Sigmoid colon (tissue), 7 donors: ENCODE measurements at regions of chr3 and their contacts with region 1.

Region 1: DNA sequence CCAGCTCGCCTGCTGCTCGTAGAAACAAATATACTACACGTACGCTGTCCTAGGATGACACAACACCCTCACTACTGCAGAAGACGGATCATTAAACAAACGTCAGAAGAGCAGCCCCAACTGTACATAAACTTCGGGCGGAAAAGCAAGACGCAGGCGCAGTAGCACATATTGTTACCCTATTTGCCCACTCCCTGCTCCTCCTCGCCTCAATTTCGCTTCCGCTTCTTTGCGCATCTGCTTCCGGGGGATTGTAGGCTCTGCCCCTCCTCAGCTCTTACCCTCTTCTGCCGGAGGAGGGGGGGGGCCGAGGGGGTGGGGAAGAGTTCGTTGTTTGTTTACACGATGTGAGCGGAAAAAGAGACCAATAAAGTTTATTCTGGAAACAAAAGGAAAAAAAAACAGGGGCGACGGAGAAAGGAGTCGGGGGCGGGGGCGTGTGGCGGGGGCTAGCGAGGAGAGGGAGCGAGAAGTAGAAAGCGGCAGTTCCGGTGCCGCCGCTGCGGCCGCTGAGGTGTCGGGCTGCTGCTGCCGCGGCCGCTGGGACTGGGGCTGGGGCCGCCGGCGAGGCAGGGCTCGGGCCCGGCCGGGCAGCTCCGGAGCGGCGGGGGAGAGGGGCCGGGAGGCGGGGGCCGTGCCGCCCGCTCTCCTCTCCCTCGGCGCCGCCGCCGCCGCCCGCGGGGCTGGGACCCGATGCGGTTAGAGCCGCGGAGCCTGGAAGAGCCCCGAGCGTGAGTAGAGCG is at the start of gene PIK3CA:
- DNase-seq: peak; percentile 99
- H3K4me3 ChIP-seq: peak within 1 kb of the TSS; percentile 58 to 94 (median 80)
- H3K27ac ChIP-seq: peak within 1 kb of the TSS; percentile 95 to 99 (median 98)
- H3K4me1 ChIP-seq: peaks cover 0 to 27% (median 18%) of the 10 kb centered on the region in 4 donors
- H3K27me3 ChIP-seq: no peaks in the 10 kb centered on the region
- CTCF ChIP-seq: no peak
- EP300 ChIP-seq: no peak
- POLR2A ChIP-seq: peak; percentile 43 to 62
- total RNA-seq, gene PIK3CA: 21.6 to 44.6 (median 25.4) TPM

Region 2: GRCh38 chr3:178875836-178876235 is 272.2 kb before region 1 on chr3:
- intact Hi-C with region 1: no loop called
- DNase-seq: no peak
- H3K4me3 ChIP-seq: no peak overlapping the region
- H3K27ac ChIP-seq: no peak overlapping the region
- H3K4me1 ChIP-seq: peaks cover 0 to 3% (median 0%) of the 10 kb centered on the region in 4 donors
- H3K27me3 ChIP-seq: no peaks in the 10 kb centered on the region
- CTCF ChIP-seq: no peak
- EP300 ChIP-seq: no peak
- POLR2A ChIP-seq: no peak

Region 3: DNA sequence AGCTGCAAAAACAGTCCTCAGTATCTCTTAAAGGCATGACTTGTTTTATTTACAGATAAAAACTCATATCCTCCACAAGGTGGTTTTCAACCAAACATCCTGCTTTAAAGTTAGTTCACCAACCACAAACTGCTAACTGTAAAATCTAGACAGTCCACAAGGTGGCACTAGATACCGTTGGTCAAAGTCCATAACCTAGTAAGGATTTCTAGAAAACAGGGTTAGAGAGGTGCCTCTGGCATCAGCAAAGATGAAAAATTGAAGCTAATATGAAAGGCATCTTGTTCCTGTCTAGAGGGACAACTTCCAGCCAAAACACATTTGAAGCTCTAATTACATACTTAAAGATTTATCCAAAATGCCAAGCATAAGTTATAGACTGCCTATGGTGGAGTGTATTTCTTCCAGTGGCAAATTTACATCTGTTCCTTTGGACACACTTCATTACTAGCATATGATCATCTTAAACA is 132.5 kb before region 1 on chr3:
- intact Hi-C with region 1: loop called (anchors 5 kb)
- DNase-seq: no peak
- H3K4me3 ChIP-seq: no peak overlapping the region
- H3K27ac ChIP-seq: no peak overlapping the region
- H3K4me1 ChIP-seq: peaks cover 0 to 11% (median 10%) of the 10 kb centered on the region in 4 donors
- H3K27me3 ChIP-seq: no peaks in the 10 kb centered on the region
- CTCF ChIP-seq: peak; percentile 62 to 92 (median 85)
- EP300 ChIP-seq: no peak
- POLR2A ChIP-seq: no peak

Region 4: GRCh38 chr3:179071550-179072397 is 76.3 kb before region 1 on chr3 and contains the start of gene ZMAT3:
- intact Hi-C with region 1: loop called (anchors 5 kb)
- DNase-seq: peak; percentile 92
- H3K4me3 ChIP-seq: peak within 1 kb of the TSS; percentile 60 to 92 (median 75)
- H3K27ac ChIP-seq: peak within 1 kb of the TSS; percentile 87 to 96 (median 92)
- H3K4me1 ChIP-seq: peaks cover 0 to 29% (median 22%) of the 10 kb centered on the region in 4 donors
- H3K27me3 ChIP-seq: no peaks in the 10 kb centered on the region
- CTCF ChIP-seq: no peak
- EP300 ChIP-seq: no peak
- POLR2A ChIP-seq: no peak
- total RNA-seq, gene ZMAT3: 12.4 to 16.9 (median 14.7) TPM

Region 5: GRCh38 chr3:179098388-179099077 is 49.5 kb before region 1 on chr3:
- intact Hi-C with region 1: loop called (anchors 5 kb)
- DNase-seq: no peak
- H3K4me3 ChIP-seq: peak overlapping the region; percentile 4 to 41 (median 33)
- H3K27ac ChIP-seq: peak overlapping the region in 2 of 4 donors; percentile 59 to 63
- H3K4me1 ChIP-seq: peaks cover 0 to 6% (median 0%) of the 10 kb centered on the region in 4 donors
- H3K27me3 ChIP-seq: no peaks in the 10 kb centered on the region
- CTCF ChIP-seq: peak in 3 of 4 experiments; percentile 18 to 32 (median 32)
- EP300 ChIP-seq: no peak
- POLR2A ChIP-seq: no peak

Region 6: DNA sequence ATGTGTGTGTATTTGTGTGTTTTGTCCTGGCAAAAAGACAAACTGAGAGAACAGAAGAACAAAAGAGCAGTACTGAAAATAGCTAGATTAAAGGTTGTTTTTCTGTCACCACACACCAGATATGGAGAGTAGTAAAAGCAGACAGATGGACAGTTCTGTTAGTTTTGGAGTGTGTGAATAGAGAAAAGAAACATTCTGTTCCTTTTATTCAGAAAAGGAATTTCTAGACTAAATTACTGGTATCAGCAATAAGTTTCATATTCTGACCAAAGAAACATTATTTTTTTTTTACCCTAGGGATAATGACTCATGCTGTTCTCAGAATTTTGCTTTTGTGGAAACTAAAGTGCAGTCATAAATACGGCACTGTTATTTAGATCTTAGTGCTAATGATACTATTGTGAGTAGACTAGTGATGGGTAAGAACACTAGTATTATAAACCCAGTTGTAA is 33.0 kb after region 1 on chr3:
- intact Hi-C with region 1: loop called (anchors 5 kb)
- DNase-seq: no peak
- H3K4me3 ChIP-seq: no peak overlapping the region
- H3K27ac ChIP-seq: peak overlapping the region; percentile 52 to 67 (median 64)
- H3K4me1 ChIP-seq: peaks cover 0 to 77% (median 56%) of the 10 kb centered on the region in 4 donors
- H3K27me3 ChIP-seq: no peaks in the 10 kb centered on the region
- CTCF ChIP-seq: no peak
- EP300 ChIP-seq: peak in 2 of 4 donors; percentile 24 to 34
- POLR2A ChIP-seq: no peak

Region 7: GRCh38 chr3:179260949-179261765 is 113.1 kb after region 1 on chr3:
- intact Hi-C with region 1: loop called (anchors 2 kb)
- DNase-seq: peak; percentile 82
- H3K4me3 ChIP-seq: peak overlapping the region; percentile 53 to 71 (median 60)
- H3K27ac ChIP-seq: peak overlapping the region; percentile 58 to 75 (median 68)
- H3K4me1 ChIP-seq: peaks cover 0 to 4% (median 2%) of the 10 kb centered on the region in 4 donors
- H3K27me3 ChIP-seq: no peaks in the 10 kb centered on the region
- CTCF ChIP-seq: no peak
- EP300 ChIP-seq: no peak
- POLR2A ChIP-seq: no peak

Region 8: GRCh38 chr3:179562591-179563270 is 414.7 kb after region 1 on chr3 and contains the start of gene ACTL6A:
- intact Hi-C with region 1: loop called (anchors 2 kb)
- DNase-seq: peak; percentile 100
- H3K4me3 ChIP-seq: peak within 1 kb of the TSS; percentile 75 to 90 (median 79)
- H3K27ac ChIP-seq: peak within 1 kb of the TSS; percentile 83 to 92 (median 88)
- H3K4me1 ChIP-seq: peaks cover 0 to 17% (median 12%) of the 10 kb centered on the region in 4 donors
- H3K27me3 ChIP-seq: no peaks in the 10 kb centered on the region
- CTCF ChIP-seq: no peak
- EP300 ChIP-seq: no peak
- POLR2A ChIP-seq: peak; percentile 57 to 64
- total RNA-seq, gene ACTL6A: 28.8 to 65.7 (median 50.3) TPM

Region 9: GRCh38 chr3:180329187-180329586 is 1181.1 kb after region 1 on chr3:
- intact Hi-C with region 1: no loop called
- DNase-seq: no peak
- H3K4me3 ChIP-seq: no peak overlapping the region
- H3K27ac ChIP-seq: no peak overlapping the region
- H3K4me1 ChIP-seq: no peaks in the 10 kb centered on the region
- H3K27me3 ChIP-seq: no peaks in the 10 kb centered on the region
- CTCF ChIP-seq: no peak
- EP300 ChIP-seq: no peak
- POLR2A ChIP-seq: no peak